ENCODE measurements at regions of chr15 and their contacts with region 1.

Region 1: DNA sequence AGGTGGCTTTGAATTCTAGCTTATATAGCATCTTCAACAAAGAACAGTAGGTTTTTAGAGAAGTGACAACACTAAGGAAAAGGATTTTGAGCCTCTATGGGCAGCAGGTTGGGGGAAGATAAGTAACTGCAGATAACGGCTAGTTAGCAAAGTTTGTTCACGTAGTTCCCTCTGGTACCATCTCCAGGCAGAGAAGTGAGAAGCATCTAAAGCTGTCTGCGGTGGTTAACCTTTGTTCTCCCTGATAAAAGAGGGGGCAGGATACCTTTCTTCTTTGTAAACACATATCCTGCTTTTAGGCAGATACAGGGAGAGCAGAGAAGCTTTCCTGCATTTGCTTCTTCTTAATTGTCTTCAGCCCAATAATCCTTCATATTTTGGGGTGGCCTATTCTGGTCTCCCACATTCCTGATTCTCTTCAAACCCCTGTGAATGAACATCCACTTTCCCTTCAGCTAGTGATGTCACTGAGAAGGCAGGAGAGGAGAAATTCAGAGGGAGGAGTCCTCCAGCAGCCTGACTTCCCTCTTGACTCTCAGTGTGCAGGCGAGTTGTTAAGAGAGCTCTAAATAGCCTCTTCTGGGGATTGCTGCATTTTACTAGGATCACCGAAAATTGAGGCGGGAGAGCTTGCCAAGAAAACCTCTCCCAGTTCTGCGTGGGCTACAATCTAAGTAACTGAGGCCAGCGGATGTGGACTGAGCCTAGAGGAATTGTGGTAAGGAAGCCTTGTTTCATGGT is 393.7 kb upstream of the C2CD4B start:
- DNase-seq: no peak
- ATAC-seq: no peak
- H3K4me3 ChIP-seq: no peak overlapping the region
- H3K27ac ChIP-seq: no peak overlapping the region
- H3K4me1 ChIP-seq: no peaks in the 10 kb centered on the region
- H3K27me3 ChIP-seq: no peaks in the 10 kb centered on the region
- CTCF ChIP-seq: no peak

Region 2: DNA sequence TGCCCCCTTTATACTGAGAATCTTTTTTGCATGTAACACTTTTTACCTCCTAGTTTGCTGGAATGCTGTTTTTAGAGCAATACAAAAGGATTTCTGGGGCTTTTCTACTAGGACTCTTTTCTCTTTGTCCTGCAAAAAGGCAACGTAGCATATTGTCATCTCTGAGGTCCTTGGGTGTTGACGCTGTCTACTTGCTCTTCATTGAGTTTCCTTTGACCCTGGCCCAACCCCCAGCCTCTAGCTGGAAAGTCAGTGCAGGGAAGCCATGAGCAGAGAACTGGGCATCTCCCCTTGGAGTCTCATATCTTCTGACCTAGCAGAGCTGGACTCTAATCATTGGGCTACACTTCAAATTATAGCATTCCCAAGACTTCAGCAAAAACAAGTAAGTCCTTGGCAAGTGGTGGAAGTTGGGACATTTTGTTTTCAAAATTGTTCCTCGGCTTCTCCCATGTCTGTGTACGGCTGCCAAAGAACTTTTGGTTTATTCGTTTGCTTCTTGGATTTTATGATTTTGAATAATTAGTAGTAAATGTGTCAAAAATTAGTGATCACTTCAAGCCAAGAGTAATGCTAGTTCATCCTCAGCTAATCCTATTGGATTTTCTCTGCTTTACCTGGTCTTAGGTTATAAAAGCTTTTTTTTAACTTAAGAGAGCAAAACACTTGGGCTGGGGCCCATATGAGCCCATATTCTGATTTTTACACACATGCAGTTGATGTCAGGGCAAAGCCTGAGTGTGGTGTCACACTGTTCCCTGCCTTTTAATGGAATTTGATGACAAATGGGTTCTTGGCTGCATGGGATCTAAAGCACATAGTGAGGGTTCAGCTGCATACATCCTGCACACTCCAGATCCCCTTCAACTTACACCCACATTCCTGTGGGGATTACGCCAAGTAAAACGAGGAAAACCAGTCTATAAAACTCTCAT is 25.8 kb after region 1 on chr15:
- CTCF ChIA-PET with region 1: no interaction called
- POLR2A ChIA-PET with region 1: interaction called, 14 read pairs
- in situ Hi-C with region 1: no loop called
- intact Hi-C with region 1: no loop called
- DNase-seq: no peak
- ATAC-seq: no peak
- H3K4me3 ChIP-seq: no peak overlapping the region
- H3K27ac ChIP-seq: no peak overlapping the region
- H3K4me1 ChIP-seq: no peaks in the 10 kb centered on the region
- H3K27me3 ChIP-seq: no peaks in the 10 kb centered on the region
- CTCF ChIP-seq: no peak

Measured in Panc1 (cell line).